GM10248 (cell line): ENCODE measurements at regions of chr9 and their contacts with region 1.

Region 1: DNA sequence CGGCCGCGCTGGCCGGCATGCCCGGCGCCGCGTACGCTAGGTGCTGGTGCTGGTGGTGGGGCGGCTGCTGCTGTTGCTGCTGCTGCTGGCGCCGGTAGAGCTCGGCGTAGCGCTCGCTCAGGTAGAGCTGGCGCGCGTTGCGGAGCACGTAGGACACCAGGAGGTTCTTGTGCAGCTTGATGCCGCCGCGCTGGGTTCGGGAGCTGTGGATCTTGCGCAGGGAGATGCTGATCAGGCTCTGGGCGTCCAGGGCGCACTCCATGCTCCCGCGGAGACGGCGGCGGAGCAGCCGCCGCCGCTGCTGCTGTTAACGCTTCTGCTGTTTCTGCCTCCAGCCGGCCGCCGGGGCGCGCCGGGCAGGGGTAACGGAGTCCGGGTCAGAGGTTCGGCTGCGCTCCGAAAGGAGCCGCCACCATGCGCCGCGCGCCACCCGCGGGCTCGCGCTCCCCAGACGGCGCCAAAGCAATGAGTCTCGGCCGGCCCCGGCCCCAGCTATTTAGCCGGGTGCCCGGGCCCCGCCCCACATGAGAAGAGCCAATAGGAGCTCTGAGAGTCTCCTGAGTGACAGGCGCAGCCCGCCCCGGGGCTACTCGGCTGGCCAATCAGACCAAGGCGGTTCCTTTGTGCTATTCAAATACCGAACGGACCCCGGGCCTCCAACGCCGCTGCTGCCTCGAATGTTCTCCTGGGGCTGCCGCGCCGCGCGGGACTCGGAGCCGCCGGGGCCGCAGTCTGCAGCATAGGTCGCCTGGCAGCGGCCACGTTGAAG is at the start of gene IER5L:
- DNase-seq: peak; percentile 99
- CTCF ChIP-seq: no peak

Region 2: DNA sequence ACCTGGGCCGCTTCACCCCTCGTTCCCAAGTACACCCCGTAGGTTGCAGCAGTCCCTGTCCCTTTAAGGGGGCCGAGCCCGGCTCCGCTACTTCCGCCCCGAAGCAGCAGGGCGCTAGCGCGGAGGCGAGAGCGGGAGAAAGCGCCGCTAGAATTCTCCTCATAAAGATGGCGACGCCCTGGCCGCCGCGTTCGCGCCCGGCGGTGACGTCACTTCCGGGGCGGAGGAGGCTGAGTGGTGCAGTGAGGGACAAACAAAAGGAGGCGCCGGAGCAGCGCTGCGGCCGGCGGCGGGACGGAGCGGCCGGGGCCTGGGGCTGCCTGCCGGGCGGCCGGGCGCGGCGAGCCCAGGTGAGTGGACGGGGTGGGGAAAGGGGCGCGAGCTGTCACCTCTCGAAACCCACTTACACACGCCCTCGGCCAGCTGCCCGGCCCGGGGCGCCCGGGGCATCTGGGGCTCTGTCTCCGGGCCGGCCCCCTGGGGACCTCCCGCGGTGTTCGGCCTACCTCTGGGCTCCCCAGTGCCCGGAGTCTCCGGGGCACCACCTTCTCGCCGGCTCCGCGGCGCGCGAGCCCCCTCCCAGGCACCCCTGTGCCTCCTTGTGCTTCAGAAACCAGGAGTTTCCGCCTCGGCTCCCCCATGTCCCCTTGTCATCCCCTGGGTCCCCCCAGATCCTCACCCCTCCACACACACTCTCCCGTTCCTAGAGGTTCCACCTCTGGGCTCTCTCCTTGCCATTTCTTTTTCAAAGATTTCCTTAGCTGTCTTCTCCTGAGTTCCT is 295.9 kb before region 1 on chr9 and contains the starts of genes KYAT1 and LRRC8A:
- CTCF ChIA-PET with region 1: no interaction called
- POLR2A ChIA-PET with region 1: no interaction called
- DNase-seq: peak; percentile 97
- CTCF ChIP-seq: peak; percentile 24

Region 3: DNA sequence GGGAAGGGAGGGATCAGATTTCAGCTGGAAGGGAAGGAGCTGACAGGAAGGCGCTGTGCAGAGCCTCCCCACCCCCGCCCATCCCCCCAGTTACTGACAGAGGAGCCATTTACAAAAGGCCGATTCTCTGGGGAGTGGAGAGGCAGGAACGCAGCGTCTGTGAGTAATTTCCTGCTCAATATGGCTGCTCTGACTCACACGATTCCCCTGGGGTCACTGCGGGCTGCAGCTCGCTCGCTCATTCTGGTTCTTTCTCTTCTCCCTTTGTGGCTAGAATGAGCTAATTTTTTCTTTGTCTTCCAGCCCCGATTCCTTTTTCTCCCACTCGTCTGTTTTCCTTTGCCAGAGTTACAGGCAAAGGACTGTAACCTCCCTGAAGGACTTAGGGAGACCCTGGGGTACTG is 38.0 kb before region 1 on chr9:
- CTCF ChIA-PET with region 1: interaction called, 680 read pairs
- POLR2A ChIA-PET with region 1: interaction called, 5 read pairs
- DNase-seq: peak; percentile 91
- CTCF ChIP-seq: no peak

Region 4: DNA sequence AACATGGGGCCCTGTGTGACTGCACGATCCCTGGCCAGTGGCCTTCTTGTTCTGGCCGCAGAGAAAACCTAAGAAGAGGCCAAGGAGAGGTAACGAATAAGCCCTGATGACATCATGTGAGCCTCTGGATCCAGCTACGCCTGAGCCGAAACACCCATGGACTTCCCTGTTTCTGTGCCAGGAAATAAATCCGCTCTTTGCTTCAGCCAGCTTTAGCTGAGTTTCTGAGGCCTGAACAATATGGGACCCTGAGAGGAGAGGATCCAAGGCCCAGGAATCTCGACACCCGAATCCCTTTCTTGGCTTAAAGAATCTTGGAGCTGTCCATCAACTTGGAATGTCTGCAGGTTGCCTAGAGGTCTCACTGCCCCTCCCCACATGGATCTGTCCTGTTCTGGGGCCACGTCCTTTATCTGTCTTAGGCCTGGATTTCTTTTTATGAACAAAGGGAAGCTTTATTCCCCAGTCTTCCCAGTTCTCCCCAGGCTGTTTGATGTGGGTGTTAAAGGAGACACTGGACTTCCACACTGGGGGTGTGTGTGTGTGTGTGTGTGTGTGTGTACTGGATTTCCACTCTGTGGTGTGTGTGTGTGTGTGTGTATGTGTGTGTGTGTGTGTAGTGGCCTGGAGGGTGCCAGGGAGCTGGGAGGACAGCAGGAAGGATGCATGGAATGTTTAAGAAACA is 13.6 kb before region 1 on chr9:
- CTCF ChIA-PET with region 1: interaction called, 14 read pairs
- POLR2A ChIA-PET with region 1: interaction called, 7 read pairs
- DNase-seq: no peak
- CTCF ChIP-seq: no peak

Region 5: GRCh38 chr9:129460323-129461261 is 282.6 kb after region 1 on chr9:
- CTCF ChIA-PET with region 1: interaction called, 10 read pairs
- POLR2A ChIA-PET with region 1: interaction called, 5 read pairs
- DNase-seq: peak; percentile 97
- CTCF ChIP-seq: peak; percentile 10

Region 6: GRCh38 chr9:129610473-129611301 is 432.7 kb after region 1 on chr9:
- CTCF ChIA-PET with region 1: interaction called, 52 read pairs
- POLR2A ChIA-PET with region 1: interaction called, 3 read pairs
- DNase-seq: peak; percentile 82
- CTCF ChIP-seq: peak; percentile 97